ENCODE measurements at regions of chr17 and their contacts with region 1.

Region 1: GRCh38 chr17:8189711-8190477 is at the start of gene BORCS6:
- DNase-seq: peak; percentile 97 to 99
- ATAC-seq: peak; percentile 41 to 68
- H3K4me3 ChIP-seq: peak within 1 kb of the TSS; percentile 71
- H3K27ac ChIP-seq: peak within 1 kb of the TSS; percentile 88 to 89
- H3K4me1 ChIP-seq: peaks cover 40% of the 10 kb centered on the region
- CTCF ChIP-seq: peak; percentile 19; the same call in 1 of the 3 replicates
- EP300 ChIP-seq: no peak
- POLR2A ChIP-seq: peak; percentile 65
- RAD21 ChIP-seq: no peak
- polyA plus RNA-seq, gene BORCS6: 3.0 and 3.3 TPM in 2 replicates

Region 2: DNA sequence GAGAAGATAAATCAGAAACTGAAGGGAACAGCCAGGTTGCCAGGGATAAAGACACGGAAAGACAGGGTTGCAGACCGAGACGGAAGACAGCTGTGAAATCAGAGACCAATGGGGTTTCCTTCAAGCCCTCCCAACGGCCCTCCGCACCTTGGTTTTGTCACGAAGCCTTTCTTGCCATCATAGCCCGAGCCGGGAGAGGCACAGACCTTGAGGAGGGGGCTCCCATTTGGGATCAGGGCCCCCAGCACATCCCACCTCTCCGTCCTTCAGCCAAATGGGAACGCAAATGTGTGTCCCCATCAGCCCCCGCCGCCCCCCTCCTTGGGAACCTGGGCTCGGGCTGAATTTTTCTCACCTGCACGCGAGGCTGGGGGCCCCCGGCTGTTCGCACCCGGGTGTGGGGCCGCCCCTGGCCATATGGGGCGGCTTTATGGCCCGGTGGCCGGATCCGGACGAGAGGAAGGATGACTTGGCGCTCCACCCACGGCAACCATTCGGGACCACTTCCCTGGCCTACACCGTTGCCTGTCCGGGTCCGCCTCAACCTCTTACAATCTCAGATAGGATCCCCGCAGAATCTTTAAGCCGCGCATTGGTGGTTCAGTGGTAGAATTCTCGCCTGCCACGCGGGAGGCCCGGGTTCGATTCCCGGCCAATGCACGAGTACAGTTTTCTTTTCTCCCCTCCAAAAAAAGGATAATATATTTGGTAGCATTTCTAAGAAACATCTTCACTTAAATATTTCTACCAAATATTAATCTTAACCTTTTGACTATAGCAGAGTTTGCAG is 64.5 kb before region 1 on chr17:
- CTCF ChIA-PET with region 1: interaction called, 25 read pairs
- POLR2A ChIA-PET with region 1: interaction called, 14 read pairs
- DNase-seq: peak; percentile 81 to 84
- ATAC-seq: peak in 1 of 2 experiments; percentile 18; a peak in 3 of 6 replicates
- H3K4me3 ChIP-seq: peak overlapping the region; percentile 56
- H3K27ac ChIP-seq: peak overlapping the region; percentile 73 to 86
- H3K4me1 ChIP-seq: peaks cover 19% of the 10 kb centered on the region
- CTCF ChIP-seq: no peak
- EP300 ChIP-seq: no peak; a peak in 1 of 5 replicates
- POLR2A ChIP-seq: no peak
- RAD21 ChIP-seq: 0 out of 5 replicates have a peak, but pooled peaks of 1 of the 2 experiments have one; percentile 5

Region 3: GRCh38 chr17:8156246-8156992 is 33.5 kb before region 1 on chr17:
- CTCF ChIA-PET with region 1: interaction called, 37 read pairs
- POLR2A ChIA-PET with region 1: interaction called, 9 read pairs
- DNase-seq: peak; percentile 100
- ATAC-seq: peak; percentile 57 to 73
- H3K4me3 ChIP-seq: peak overlapping the region; percentile 65
- H3K27ac ChIP-seq: peak overlapping the region; percentile 89 to 93
- H3K4me1 ChIP-seq: peaks cover 55% of the 10 kb centered on the region
- CTCF ChIP-seq: no peak
- EP300 ChIP-seq: no peak
- POLR2A ChIP-seq: peak; percentile 54
- RAD21 ChIP-seq: peak; percentile 33 to 40; a peak in 2 of 5 replicates

Region 4: DNA sequence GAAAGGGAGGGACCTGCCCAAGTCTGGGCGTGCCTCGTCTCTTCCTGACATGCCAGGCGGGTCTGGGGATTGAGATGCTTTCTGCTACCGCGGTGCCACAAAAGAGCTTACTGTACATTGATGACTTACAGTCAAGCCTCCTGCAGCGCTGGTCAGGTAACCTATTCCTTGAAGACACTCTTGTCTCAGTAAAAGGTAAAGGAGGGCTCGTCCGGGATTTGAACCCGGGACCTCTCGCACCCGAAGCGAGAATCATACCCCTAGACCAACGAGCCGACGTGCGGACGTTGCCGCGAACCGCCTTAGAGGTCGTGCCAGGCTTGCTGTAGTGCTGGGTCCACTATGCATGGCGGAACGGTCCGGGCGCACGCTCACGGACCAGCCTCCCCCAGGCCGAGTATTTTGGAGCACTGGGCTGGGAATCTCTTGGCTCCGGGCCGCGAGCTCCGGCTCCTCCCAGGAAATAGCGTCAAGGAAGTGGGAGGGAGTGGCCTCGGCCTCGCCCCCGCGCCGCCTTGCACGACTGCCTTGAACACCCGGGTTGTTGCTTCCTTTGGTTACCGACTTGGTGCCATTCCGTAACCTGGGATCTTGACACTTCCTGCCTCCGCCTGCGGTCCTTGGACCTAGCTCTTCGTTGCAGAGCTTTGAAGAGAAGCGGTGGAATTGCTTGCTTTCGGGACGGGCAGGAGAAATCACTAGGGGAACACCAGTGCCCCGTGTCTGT is 32.9 kb after region 1 on chr17:
- CTCF ChIA-PET with region 1: interaction called, 30 read pairs
- POLR2A ChIA-PET with region 1: interaction called, 31 read pairs
- DNase-seq: peak; percentile 85 to 98
- ATAC-seq: peak; percentile 38 to 64
- H3K4me3 ChIP-seq: peak overlapping the region; percentile 78
- H3K27ac ChIP-seq: peak overlapping the region; percentile 95 to 97
- H3K4me1 ChIP-seq: peaks cover 32% of the 10 kb centered on the region
- CTCF ChIP-seq: no peak
- EP300 ChIP-seq: no peak
- POLR2A ChIP-seq: peak; percentile 85
- RAD21 ChIP-seq: no peak

Region 5: DNA sequence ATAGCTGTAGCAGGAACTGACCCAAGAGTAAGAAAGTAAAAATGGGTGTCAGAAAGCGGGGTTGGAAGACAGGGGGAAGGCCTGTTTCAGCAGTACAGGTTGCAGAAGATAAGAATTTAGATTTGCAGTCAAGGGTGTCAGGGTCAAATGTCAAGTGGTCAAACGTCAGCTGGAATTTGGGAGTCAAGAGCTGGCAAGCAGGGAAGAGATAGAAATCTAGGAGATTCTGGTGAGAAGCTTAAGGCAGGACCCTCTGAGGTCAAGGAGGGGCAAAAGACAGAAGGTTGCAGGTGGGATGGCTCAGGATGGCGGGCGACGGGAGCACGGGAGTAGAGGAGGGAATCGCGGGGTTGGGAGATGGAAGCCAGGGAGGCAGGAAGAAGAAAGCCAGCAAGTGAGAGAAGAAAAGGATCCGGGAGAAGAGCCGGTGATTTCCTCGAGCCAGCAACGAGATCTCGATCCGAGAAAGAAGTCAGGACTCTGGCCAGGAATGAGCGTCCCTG is 105.0 kb after region 1 on chr17:
- CTCF ChIA-PET with region 1: interaction called, 3 read pairs
- POLR2A ChIA-PET with region 1: interaction called, 11 read pairs
- DNase-seq: no peak
- ATAC-seq: peak; percentile 48
- H3K4me3 ChIP-seq: peak overlapping the region; percentile 48
- H3K27ac ChIP-seq: peak overlapping the region; percentile 89 to 93
- H3K4me1 ChIP-seq: peaks cover 16% of the 10 kb centered on the region
- CTCF ChIP-seq: no peak
- EP300 ChIP-seq: no peak
- POLR2A ChIP-seq: no peak
- RAD21 ChIP-seq: no peak

Region 6: GRCh38 chr17:8397203-8398045 is 207.5 kb after region 1 on chr17 and contains the start of gene RNF222:
- CTCF ChIA-PET with region 1: no interaction called
- POLR2A ChIA-PET with region 1: no interaction called
- DNase-seq: no peak
- ATAC-seq: peak in 1 of 2 experiments; percentile 5; a peak in 1 of 6 replicates
- H3K4me3 ChIP-seq: no peak within 1 kb of the TSS
- H3K27ac ChIP-seq: no peak within 1 kb of the TSS
- H3K4me1 ChIP-seq: no peaks in the 10 kb centered on the region
- CTCF ChIP-seq: no peak
- EP300 ChIP-seq: no peak
- POLR2A ChIP-seq: no peak
- RAD21 ChIP-seq: no peak
- polyA plus RNA-seq, gene RNF222: not detected in 2 replicates